K562 (cell line): ENCODE measurements at regions of chr10 and their contacts with region 1.

Region 1: DNA sequence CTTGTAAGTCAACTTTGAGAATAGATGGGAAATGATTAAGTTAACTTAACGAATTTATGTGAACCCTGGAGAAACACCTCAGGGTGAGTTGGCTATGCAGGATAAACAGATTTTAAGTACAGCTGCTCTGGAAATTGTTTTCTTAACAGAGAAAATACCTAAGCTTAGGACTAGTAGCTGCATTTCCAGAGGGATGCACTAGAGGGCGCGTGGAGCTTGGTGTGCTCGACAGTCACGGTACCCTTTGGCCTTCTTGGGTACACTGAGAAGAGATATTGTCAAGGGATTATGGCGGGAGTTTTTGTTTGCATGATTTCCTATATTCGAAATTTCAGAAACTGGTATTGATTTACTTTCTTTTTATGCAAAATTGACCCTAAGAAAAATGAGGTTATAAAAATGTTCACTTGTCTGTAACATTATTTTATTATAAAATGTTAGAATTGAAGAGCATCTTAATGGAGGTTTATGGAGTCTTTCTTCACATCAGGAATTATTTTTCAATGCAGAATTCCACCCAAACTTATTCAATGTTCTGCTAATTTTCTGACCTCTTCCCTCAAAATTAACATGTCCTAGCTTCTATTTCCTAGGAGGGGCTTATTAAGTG is 58.4 kb upstream of the MYO3A start:
- DNase-seq: peak; percentile 54 to 76 (median 62)
- ATAC-seq: peak; percentile 86
- H3K4me3 ChIP-seq: no peak overlapping the region
- H3K27ac ChIP-seq: no peak overlapping the region
- H3K4me1 ChIP-seq: no peaks in the 10 kb centered on the region
- H3K27me3 ChIP-seq: no peaks in the 10 kb centered on the region
- CTCF ChIP-seq: peak; percentile 72 to 85 (median 83)
- EP300 ChIP-seq: no peak
- POLR2A ChIP-seq: no peak
- RAD21 ChIP-seq: peak; percentile 55 to 77

Region 2: DNA sequence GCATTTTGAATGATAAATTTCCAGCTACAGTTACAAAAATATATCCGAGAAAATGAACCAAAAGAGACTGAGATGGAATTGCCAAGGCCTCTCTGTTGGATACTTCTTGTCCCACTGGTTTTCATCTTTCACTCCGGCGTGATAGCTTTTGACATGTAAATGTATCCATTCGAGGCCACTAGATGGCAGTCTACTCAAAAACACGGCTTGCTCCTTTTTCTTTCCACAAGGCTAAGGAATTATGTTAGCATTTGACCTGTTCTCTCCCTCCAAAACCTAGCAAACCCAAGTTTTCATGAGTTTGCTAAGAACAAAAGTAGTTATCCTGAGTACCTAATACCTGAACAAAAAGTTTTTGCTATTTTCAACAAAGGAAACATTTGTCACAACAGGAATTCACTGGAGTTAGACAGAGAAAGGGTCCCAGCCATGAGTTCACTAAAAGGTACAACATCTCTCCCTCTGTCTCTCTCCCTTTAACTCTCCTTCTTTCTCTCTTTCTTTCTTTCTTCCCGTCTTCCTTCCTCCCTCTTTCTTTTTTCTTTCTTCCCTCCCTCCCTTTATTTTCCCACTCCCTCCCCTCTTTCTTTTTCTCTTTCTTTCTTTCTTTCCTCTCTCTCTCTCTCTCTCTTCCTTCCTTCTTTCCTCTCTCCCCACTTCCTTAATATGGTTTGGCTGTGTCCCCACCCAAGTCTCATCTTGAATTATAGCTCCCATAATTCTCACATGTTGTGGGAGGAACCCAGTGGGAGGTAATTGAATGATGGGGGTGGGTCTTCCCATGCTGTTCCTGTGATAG is 149.5 kb before region 1 on chr10:
- CTCF ChIA-PET with region 1: no interaction called
- POLR2A ChIA-PET with region 1: no interaction called
- in situ Hi-C with region 1: no loop called
- intact Hi-C with region 1: loop called (anchors 10 kb)
- DNase-seq: peak; percentile 36 to 71 (median 47)
- ATAC-seq: peak; percentile 84
- H3K4me3 ChIP-seq: no peak overlapping the region
- H3K27ac ChIP-seq: no peak overlapping the region
- H3K4me1 ChIP-seq: no peaks in the 10 kb centered on the region
- H3K27me3 ChIP-seq: peaks cover 0 to 3% of the 10 kb centered on the region in 2 experiments; a peak in 1 of 5 replicates
- CTCF ChIP-seq: peak; percentile 58 to 72 (median 62)
- EP300 ChIP-seq: no peak
- POLR2A ChIP-seq: no peak
- RAD21 ChIP-seq: peak; percentile 42 to 76

Region 3: DNA sequence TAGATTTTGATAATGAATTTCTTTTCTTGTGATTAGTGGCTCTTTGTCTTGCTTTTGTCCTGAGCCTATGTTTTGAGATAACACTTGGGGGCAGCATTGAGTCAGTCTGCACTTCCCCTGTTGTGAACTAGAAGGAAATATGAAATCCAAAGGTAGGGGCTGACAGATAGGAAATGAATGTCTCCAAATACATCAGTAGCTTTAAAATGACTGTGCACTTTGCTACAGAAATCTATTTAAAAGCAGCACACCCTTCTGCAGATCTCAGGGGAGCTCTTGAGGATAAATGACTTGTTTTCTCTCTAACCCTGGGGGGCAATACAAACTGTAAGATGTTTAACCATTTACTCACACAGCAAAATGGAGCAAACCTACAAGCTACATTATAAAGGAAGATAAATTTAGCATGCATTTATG is 117.6 kb before region 1 on chr10:
- CTCF ChIA-PET with region 1: no interaction called
- POLR2A ChIA-PET with region 1: no interaction called
- in situ Hi-C with region 1: no loop called
- intact Hi-C with region 1: loop called (anchors 1 kb)
- DNase-seq: peak; percentile 45 to 66 (median 53)
- ATAC-seq: peak; percentile 92
- H3K4me3 ChIP-seq: no peak overlapping the region
- H3K27ac ChIP-seq: no peak overlapping the region
- H3K4me1 ChIP-seq: peaks cover 0 to 4% of the 10 kb centered on the region in 2 experiments; a peak in 3 of 5 replicates
- H3K27me3 ChIP-seq: no peaks in the 10 kb centered on the region
- CTCF ChIP-seq: peak; percentile 62 to 81 (median 73)
- EP300 ChIP-seq: no peak
- POLR2A ChIP-seq: no peak
- RAD21 ChIP-seq: peak; percentile 75 to 78

Region 4: DNA sequence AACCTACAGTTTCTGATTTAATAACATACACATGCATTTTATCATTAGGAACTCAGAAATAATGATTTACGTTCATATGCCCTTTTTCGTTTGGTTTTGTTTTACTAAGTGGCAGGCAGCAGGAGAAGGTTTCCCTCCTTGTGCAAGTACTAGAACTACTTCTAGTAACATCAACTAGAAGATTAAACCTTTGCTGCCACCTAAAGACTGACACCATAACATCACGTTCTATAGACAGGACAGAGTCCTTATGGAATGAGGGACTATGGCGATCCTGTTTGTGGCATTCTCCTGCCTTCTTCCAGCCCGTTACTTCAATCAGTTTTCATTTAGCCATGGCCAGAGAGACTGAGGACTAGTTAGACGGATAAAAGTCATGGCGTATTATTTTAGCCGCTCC is 394.1 kb after region 1 on chr10:
- CTCF ChIA-PET with region 1: no interaction called
- POLR2A ChIA-PET with region 1: no interaction called
- in situ Hi-C with region 1: no loop called
- intact Hi-C with region 1: loop called (anchors 5 kb)
- DNase-seq: peak in 2 of 4 experiments; percentile 26 to 29
- ATAC-seq: peak; percentile 77
- H3K4me3 ChIP-seq: no peak overlapping the region
- H3K27ac ChIP-seq: no peak overlapping the region
- H3K4me1 ChIP-seq: no peaks in the 10 kb centered on the region
- H3K27me3 ChIP-seq: peaks cover 0 to 4% of the 10 kb centered on the region in 2 experiments; a peak in 3 of 5 replicates
- CTCF ChIP-seq: peak; percentile 29 to 53 (median 38); a peak in 4 of 6 replicates
- EP300 ChIP-seq: no peak
- POLR2A ChIP-seq: no peak
- RAD21 ChIP-seq: peak; percentile 43 to 58